ENCODE measurements at regions of chr4 and their contacts with region 1.

Region 1: DNA sequence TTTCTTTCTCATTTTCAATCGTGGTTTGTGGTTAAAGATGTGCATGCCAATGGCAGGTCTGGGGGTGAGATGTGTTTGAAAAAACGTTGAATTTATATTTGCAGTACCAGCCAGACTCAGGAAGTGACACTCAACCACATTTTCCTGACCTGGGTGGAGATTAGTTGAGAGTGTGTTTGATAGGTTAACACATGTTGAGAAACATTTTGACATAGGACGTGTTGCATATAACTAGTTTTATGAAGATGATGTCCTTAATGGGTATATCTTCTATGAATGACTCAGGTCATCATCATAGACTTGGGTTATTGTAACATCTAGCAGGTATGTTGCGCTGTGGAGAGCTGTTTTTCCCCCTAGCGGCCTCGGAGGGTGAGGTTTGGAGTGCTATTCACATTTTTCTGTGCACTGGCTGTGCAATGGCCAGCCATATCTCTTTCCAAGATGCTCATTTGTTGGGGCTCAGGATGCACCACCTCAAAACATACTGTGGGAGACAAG is 21.7 kb upstream of the CD38 start:
- DNase-seq: peak; percentile 44 to 93 (median 62)
- ATAC-seq: peak; percentile 81
- H3K4me3 ChIP-seq: peak overlapping the region; percentile 29
- H3K4me3 Mint-ChIP-seq: peak overlapping the region; percentile 73
- H3K27ac ChIP-seq: peak overlapping the region in 1 of 2 donors; percentile 48
- H3K27ac Mint-ChIP-seq: peak overlapping the region; percentile 86
- H3K4me1 ChIP-seq: peaks cover 36% of the 10 kb centered on the region
- H3K4me1 Mint-ChIP-seq: peaks cover 60% of the 10 kb centered on the region
- H3K27me3 ChIP-seq: no peaks in the 10 kb centered on the region
- H3K27me3 Mint-ChIP-seq: no peaks in the 10 kb centered on the region
- CTCF ChIP-seq: peak; percentile 66

Region 2: DNA sequence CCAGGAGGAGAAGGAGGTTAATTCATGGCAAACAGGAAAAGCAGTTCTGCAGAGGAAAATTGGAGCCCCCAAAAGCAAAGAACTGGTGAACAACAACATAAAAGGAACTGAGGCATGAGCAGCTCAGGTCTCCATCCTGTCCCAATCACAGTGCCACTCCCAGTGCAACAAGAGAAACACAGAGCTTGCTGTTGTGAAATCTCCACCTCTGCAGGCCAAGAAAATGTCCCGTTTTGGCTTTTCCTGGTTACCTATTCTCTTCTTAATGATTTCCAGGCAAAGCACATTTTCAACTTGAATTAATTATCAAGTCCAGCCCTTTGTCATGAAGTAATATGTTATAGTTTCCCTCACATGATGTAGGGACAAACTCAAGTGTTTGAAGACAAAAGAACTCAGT is 327.8 kb before region 1 on chr4:
- CTCF ChIA-PET with region 1: no interaction called
- POLR2A ChIA-PET with region 1: no interaction called
- intact Hi-C with region 1: no loop called
- DNase-seq: no peak
- ATAC-seq: no peak
- H3K4me3 ChIP-seq: no peak overlapping the region
- H3K4me3 Mint-ChIP-seq: no peak overlapping the region
- H3K27ac ChIP-seq: no peak overlapping the region
- H3K27ac Mint-ChIP-seq: no peak overlapping the region
- H3K4me1 ChIP-seq: peaks cover 3% of the 10 kb centered on the region
- H3K4me1 Mint-ChIP-seq: no peaks in the 10 kb centered on the region
- H3K27me3 ChIP-seq: no peaks in the 10 kb centered on the region
- H3K27me3 Mint-ChIP-seq: no peaks in the 10 kb centered on the region
- CTCF ChIP-seq: no peak

Region 3: GRCh38 chr4:15655229-15656037 is 101.0 kb before region 1 on chr4 and contains the start of gene FBXL5:
- CTCF ChIA-PET with region 1: no interaction called
- POLR2A ChIA-PET with region 1: interaction called, 3 read pairs
- intact Hi-C with region 1: loop called in 1 of 2 experiments (anchors 10 kb)
- DNase-seq: peak; percentile 58 to 97 (median 80)
- ATAC-seq: peak; percentile 78
- H3K4me3 ChIP-seq: peak within 1 kb of the TSS; percentile 89
- H3K4me3 Mint-ChIP-seq: peak within 1 kb of the TSS; percentile 95
- H3K27ac ChIP-seq: peak within 1 kb of the TSS; percentile 90 to 93
- H3K27ac Mint-ChIP-seq: peak within 1 kb of the TSS; percentile 90
- H3K4me1 ChIP-seq: peaks cover 22% of the 10 kb centered on the region
- H3K4me1 Mint-ChIP-seq: peaks cover 46% of the 10 kb centered on the region
- H3K27me3 ChIP-seq: no peaks in the 10 kb centered on the region
- H3K27me3 Mint-ChIP-seq: no peaks in the 10 kb centered on the region
- CTCF ChIP-seq: no peak
- total RNA-seq, gene FBXL5: 60.1 to 62.5 TPM

Region 4: GRCh38 chr4:15681207-15682015 is 75.0 kb before region 1 on chr4 and contains the start of gene FAM200B:
- CTCF ChIA-PET with region 1: interaction called, 3 read pairs
- POLR2A ChIA-PET with region 1: interaction called, 19 read pairs
- intact Hi-C with region 1: loop called (anchors 2 to 5 kb)
- DNase-seq: peak; percentile 92 to 98 (median 96)
- ATAC-seq: peak; percentile 96
- H3K4me3 ChIP-seq: peak within 1 kb of the TSS; percentile 84
- H3K4me3 Mint-ChIP-seq: peak within 1 kb of the TSS; percentile 94
- H3K27ac ChIP-seq: peak within 1 kb of the TSS; percentile 71 to 77
- H3K27ac Mint-ChIP-seq: peak within 1 kb of the TSS; percentile 93
- H3K4me1 ChIP-seq: peaks cover 6% of the 10 kb centered on the region
- H3K4me1 Mint-ChIP-seq: peaks cover 46% of the 10 kb centered on the region
- H3K27me3 ChIP-seq: no peaks in the 10 kb centered on the region
- H3K27me3 Mint-ChIP-seq: no peaks in the 10 kb centered on the region
- CTCF ChIP-seq: no peak
- total RNA-seq, gene FAM200B: 18.5 to 22.1 TPM

Region 5: DNA sequence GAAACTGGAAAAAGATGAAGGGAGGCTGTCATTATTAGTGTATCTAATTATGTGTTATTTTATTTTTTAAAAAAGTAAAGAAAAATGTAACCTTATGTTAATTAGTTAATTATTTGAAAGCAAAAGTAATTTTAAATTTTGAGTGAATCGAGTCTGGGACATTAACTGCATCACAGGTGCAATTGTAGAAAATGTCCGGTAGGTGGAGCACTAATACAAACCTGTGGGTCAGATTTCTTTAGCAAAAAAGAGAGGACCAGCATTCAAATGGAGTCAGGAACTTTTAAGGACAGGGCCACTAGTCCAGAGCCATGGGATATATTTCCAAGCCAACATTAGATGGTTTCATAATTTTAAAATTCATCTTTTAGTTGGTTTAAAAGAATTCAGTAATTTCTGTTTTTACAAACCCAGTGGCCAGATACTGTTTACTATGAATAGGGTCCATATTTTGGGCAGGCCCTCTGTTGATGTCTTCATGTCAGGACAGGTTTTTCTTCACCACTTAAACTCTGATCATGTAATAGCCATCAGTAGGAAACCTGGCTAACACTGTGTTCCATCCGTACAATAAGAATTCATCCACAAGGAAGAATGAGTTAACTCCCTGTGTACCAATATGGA is 26.4 kb before region 1 on chr4:
- CTCF ChIA-PET with region 1: interaction called, 7 read pairs
- POLR2A ChIA-PET with region 1: no interaction called
- intact Hi-C with region 1: loop called in 1 of 2 experiments (anchors 1 kb)
- DNase-seq: peak in 9 of 14 experiments; percentile 7 to 71 (median 12)
- ATAC-seq: peak; percentile 66
- H3K4me3 ChIP-seq: no peak overlapping the region
- H3K4me3 Mint-ChIP-seq: no peak overlapping the region
- H3K27ac ChIP-seq: no peak overlapping the region
- H3K27ac Mint-ChIP-seq: no peak overlapping the region
- H3K4me1 ChIP-seq: peaks cover 3% of the 10 kb centered on the region
- H3K4me1 Mint-ChIP-seq: peaks cover 14% of the 10 kb centered on the region
- H3K27me3 ChIP-seq: no peaks in the 10 kb centered on the region
- H3K27me3 Mint-ChIP-seq: no peaks in the 10 kb centered on the region
- CTCF ChIP-seq: peak; percentile 95

Region 6: GRCh38 chr4:15738877-15739276 is 17.5 kb before region 1 on chr4:
- CTCF ChIA-PET with region 1: interaction called, 14 read pairs
- POLR2A ChIA-PET with region 1: interaction called, 5 read pairs
- intact Hi-C with region 1: no loop called
- DNase-seq: no peak
- ATAC-seq: no peak
- H3K4me3 ChIP-seq: no peak overlapping the region
- H3K4me3 Mint-ChIP-seq: no peak overlapping the region
- H3K27ac ChIP-seq: no peak overlapping the region
- H3K27ac Mint-ChIP-seq: no peak overlapping the region
- H3K4me1 ChIP-seq: peaks cover 6% of the 10 kb centered on the region
- H3K4me1 Mint-ChIP-seq: peaks cover 30% of the 10 kb centered on the region
- H3K27me3 ChIP-seq: no peaks in the 10 kb centered on the region
- H3K27me3 Mint-ChIP-seq: no peaks in the 10 kb centered on the region
- CTCF ChIP-seq: no peak

Region 7: GRCh38 chr4:15778289-15779241 is 22.2 kb after region 1 on chr4 and contains the start of gene CD38:
- CTCF ChIA-PET with region 1: interaction called, 5 read pairs
- POLR2A ChIA-PET with region 1: interaction called, 12 read pairs
- intact Hi-C with region 1: loop called in 1 of 2 experiments (anchors 1 kb)
- DNase-seq: peak in 12 of 14 experiments; percentile 15 to 67 (median 40)
- ATAC-seq: peak; percentile 62
- H3K4me3 ChIP-seq: peak within 1 kb of the TSS; percentile 63
- H3K4me3 Mint-ChIP-seq: peak within 1 kb of the TSS; percentile 89
- H3K27ac ChIP-seq: peak within 1 kb of the TSS in 1 of 2 donors; percentile 24
- H3K27ac Mint-ChIP-seq: peak within 1 kb of the TSS; percentile 83
- H3K4me1 ChIP-seq: peaks cover 30% of the 10 kb centered on the region
- H3K4me1 Mint-ChIP-seq: peaks cover 77% of the 10 kb centered on the region
- H3K27me3 ChIP-seq: peaks cover 0 to 2% of the 10 kb centered on the region in 2 experiments
- H3K27me3 Mint-ChIP-seq: no peaks in the 10 kb centered on the region
- CTCF ChIP-seq: no peak
- total RNA-seq, gene CD38: 9.6 to 9.9 TPM

Region 8: GRCh38 chr4:16123356-16124084 is 367.1 kb after region 1 on chr4:
- CTCF ChIA-PET with region 1: no interaction called
- POLR2A ChIA-PET with region 1: no interaction called
- intact Hi-C with region 1: no loop called
- DNase-seq: no peak
- ATAC-seq: no peak
- H3K4me3 ChIP-seq: no peak overlapping the region
- H3K4me3 Mint-ChIP-seq: no peak overlapping the region
- H3K27ac ChIP-seq: no peak overlapping the region
- H3K27ac Mint-ChIP-seq: no peak overlapping the region
- H3K4me1 ChIP-seq: peaks cover 18% of the 10 kb centered on the region
- H3K4me1 Mint-ChIP-seq: peaks cover 12% of the 10 kb centered on the region
- H3K27me3 ChIP-seq: no peaks in the 10 kb centered on the region
- H3K27me3 Mint-ChIP-seq: no peaks in the 10 kb centered on the region
- CTCF ChIP-seq: no peak

Region 9: GRCh38 chr4:17038510-17039176 is 1282.2 kb after region 1 on chr4:
- CTCF ChIA-PET with region 1: no interaction called
- POLR2A ChIA-PET with region 1: no interaction called
- intact Hi-C with region 1: no loop called
- DNase-seq: no peak
- ATAC-seq: no peak
- H3K4me3 ChIP-seq: no peak overlapping the region
- H3K4me3 Mint-ChIP-seq: no peak overlapping the region
- H3K27ac ChIP-seq: no peak overlapping the region
- H3K27ac Mint-ChIP-seq: no peak overlapping the region
- H3K4me1 ChIP-seq: no peaks in the 10 kb centered on the region
- H3K4me1 Mint-ChIP-seq: no peaks in the 10 kb centered on the region
- H3K27me3 ChIP-seq: no peaks in the 10 kb centered on the region
- H3K27me3 Mint-ChIP-seq: peaks cover 6% of the 10 kb centered on the region
- CTCF ChIP-seq: no peak

Measured in CD4-positive, alpha-beta T cell (primary cell).